CD8-positive, alpha-beta memory T cell (primary cell): ENCODE measurements at regions of chr11 and their contacts with region 1.

Region 1: DNA sequence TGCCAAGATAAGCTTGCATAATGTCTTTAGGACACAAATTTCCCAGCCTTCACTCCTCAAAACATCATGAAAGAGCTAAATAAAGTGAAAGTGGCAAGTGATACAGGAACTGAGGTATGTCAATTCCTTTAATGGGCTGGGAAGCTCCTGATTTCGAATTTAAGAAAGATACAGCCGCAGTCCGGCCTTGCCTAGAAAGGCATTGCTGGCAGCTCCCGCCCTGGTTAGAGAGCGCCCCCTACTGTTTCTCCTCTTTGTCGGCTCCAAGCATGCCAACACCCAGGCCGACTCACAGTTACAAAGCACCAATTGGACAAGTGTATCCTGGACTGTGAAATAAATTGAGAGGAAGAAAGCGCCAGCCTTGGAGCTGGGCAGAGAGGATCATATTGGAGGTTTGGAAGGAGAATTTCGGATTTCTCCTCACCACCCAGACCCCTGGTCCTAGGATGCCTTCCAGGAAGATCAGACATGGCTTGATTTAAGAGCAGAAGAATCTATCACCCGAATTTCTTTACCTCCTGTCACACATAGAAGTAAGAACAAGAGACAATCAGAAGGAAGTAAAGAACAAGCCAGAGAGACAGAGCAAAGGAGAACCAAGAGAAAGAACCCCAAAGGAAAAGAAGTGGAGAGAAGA is 84.0 kb downstream of the FAM76B start:
- DNase-seq: peak; percentile 67 to 88 (median 79)
- H3K4me3 ChIP-seq: peak overlapping the region; percentile 35
- H3K4me3 Mint-ChIP-seq: no peak overlapping the region
- H3K27ac ChIP-seq: no peak overlapping the region
- H3K27ac Mint-ChIP-seq: no peak overlapping the region
- H3K4me1 ChIP-seq: peaks cover 47% of the 10 kb centered on the region
- H3K4me1 Mint-ChIP-seq: peaks cover 7 to 10% (median 9%) of the 10 kb centered on the region in 3 donors
- H3K27me3 ChIP-seq: no peaks in the 10 kb centered on the region
- H3K27me3 Mint-ChIP-seq: no peaks in the 10 kb centered on the region

Region 2: DNA sequence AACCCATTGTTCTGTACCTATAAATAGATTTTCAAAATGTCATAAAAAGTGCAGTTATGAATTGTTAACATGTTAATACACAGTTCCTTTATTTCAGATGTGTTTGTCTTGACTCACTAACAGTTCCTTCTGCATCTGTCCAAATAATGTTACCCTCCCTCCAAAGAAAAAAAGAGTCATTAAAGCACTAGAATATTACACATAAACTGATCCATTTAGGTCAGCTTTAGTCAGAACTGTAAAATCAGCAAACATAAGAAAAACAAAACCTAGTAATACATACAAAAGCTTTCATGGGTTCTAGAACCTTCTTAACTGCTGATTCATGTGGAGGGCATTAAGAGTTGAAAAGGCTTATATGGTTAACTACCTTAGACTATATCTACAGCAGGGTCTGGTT is 540.0 kb before region 1 on chr11:
- CTCF ChIA-PET with region 1: interaction called, 335 read pairs
- POLR2A ChIA-PET with region 1: no interaction called
- DNase-seq: no peak
- H3K4me3 ChIP-seq: no peak overlapping the region
- H3K4me3 Mint-ChIP-seq: no peak overlapping the region
- H3K27ac ChIP-seq: no peak overlapping the region
- H3K27ac Mint-ChIP-seq: peak overlapping the region in 1 of 8 donors; percentile 64
- H3K4me1 ChIP-seq: no peaks in the 10 kb centered on the region
- H3K4me1 Mint-ChIP-seq: peaks cover 0 to 14% (median 14%) of the 10 kb centered on the region in 3 donors
- H3K27me3 ChIP-seq: no peaks in the 10 kb centered on the region
- H3K27me3 Mint-ChIP-seq: no peaks in the 10 kb centered on the region

Region 3: GRCh38 chr11:95212609-95213008 is 493.0 kb before region 1 on chr11:
- CTCF ChIA-PET with region 1: interaction called, 15 read pairs
- POLR2A ChIA-PET with region 1: no interaction called
- DNase-seq: no peak
- H3K4me3 ChIP-seq: no peak overlapping the region
- H3K4me3 Mint-ChIP-seq: no peak overlapping the region
- H3K27ac ChIP-seq: no peak overlapping the region
- H3K27ac Mint-ChIP-seq: peak overlapping the region in 1 of 8 donors; percentile 9
- H3K4me1 ChIP-seq: peaks cover 7% of the 10 kb centered on the region
- H3K4me1 Mint-ChIP-seq: peaks cover 5 to 28% (median 25%) of the 10 kb centered on the region in 3 donors
- H3K27me3 ChIP-seq: no peaks in the 10 kb centered on the region
- H3K27me3 Mint-ChIP-seq: no peaks in the 10 kb centered on the region

Region 4: GRCh38 chr11:95231127-95231880 is 474.3 kb before region 1 on chr11 and contains the start of gene SESN3:
- CTCF ChIA-PET with region 1: interaction called, 24 read pairs
- POLR2A ChIA-PET with region 1: interaction called, 9 read pairs
- DNase-seq: peak; percentile 98 to 99 (median 99)
- H3K4me3 ChIP-seq: peak within 1 kb of the TSS; percentile 68
- H3K4me3 Mint-ChIP-seq: peak within 1 kb of the TSS in 6 of 7 donors; percentile 90 to 97 (median 94)
- H3K27ac ChIP-seq: peak within 1 kb of the TSS; percentile 60
- H3K27ac Mint-ChIP-seq: peak within 1 kb of the TSS; percentile 83 to 98 (median 89)
- H3K4me1 ChIP-seq: peaks cover 24% of the 10 kb centered on the region
- H3K4me1 Mint-ChIP-seq: peaks cover 41 to 50% (median 49%) of the 10 kb centered on the region in 3 donors
- H3K27me3 ChIP-seq: no peaks in the 10 kb centered on the region
- H3K27me3 Mint-ChIP-seq: no peaks in the 10 kb centered on the region
- total RNA-seq, gene SESN3: 18.8 to 19.7 TPM

Region 5: DNA sequence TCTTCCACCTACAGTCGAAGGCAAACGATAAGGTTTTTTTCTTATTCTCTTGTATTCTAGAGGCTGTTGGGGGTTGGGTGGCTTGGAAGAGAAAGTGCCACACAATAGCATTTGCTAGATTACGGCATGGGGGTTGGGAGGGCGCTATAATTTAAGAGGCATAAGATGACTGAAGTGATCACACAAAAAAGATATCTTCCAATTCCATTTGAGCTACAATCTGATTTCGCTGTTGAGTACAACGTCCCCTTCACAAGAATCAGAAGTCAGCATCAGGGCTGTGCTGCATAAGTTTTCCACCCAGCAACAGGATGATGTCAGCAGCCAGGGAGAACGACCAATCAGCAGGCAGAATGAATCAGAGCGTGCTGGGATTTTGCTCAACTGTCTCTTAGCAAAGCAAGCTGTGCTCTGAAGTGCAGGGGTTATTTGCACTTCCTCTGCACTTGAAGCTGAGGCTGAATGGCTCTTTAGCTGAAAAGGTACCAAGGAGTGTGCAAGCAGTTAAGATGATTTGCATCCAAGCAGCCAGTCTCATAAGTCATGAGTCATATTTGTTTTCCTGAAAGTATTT is 451.4 kb before region 1 on chr11:
- CTCF ChIA-PET with region 1: interaction called, 11 read pairs
- POLR2A ChIA-PET with region 1: interaction called, 5 read pairs
- DNase-seq: peak; percentile 50 to 85 (median 72)
- H3K4me3 ChIP-seq: peak overlapping the region; percentile 52
- H3K4me3 Mint-ChIP-seq: peak overlapping the region; percentile 81 to 94 (median 88)
- H3K27ac ChIP-seq: peak overlapping the region; percentile 10
- H3K27ac Mint-ChIP-seq: peak overlapping the region; percentile 35 to 96 (median 88)
- H3K4me1 ChIP-seq: peaks cover 37% of the 10 kb centered on the region
- H3K4me1 Mint-ChIP-seq: peaks cover 21 to 41% (median 31%) of the 10 kb centered on the region in 3 donors
- H3K27me3 ChIP-seq: no peaks in the 10 kb centered on the region
- H3K27me3 Mint-ChIP-seq: no peaks in the 10 kb centered on the region

Region 6: GRCh38 chr11:95605271-95605940 is 100.2 kb before region 1 on chr11:
- CTCF ChIA-PET with region 1: no interaction called
- POLR2A ChIA-PET with region 1: no interaction called
- DNase-seq: no peak
- H3K4me3 ChIP-seq: no peak overlapping the region
- H3K4me3 Mint-ChIP-seq: no peak overlapping the region
- H3K27ac ChIP-seq: no peak overlapping the region
- H3K27ac Mint-ChIP-seq: no peak overlapping the region
- H3K4me1 ChIP-seq: peaks cover 3% of the 10 kb centered on the region
- H3K4me1 Mint-ChIP-seq: peaks cover under 1 to 12% (median 8%) of the 10 kb centered on the region in 3 donors
- H3K27me3 ChIP-seq: no peaks in the 10 kb centered on the region
- H3K27me3 Mint-ChIP-seq: peaks cover 1 to 4% of the 10 kb centered on the region in 2 donors

Region 7: DNA sequence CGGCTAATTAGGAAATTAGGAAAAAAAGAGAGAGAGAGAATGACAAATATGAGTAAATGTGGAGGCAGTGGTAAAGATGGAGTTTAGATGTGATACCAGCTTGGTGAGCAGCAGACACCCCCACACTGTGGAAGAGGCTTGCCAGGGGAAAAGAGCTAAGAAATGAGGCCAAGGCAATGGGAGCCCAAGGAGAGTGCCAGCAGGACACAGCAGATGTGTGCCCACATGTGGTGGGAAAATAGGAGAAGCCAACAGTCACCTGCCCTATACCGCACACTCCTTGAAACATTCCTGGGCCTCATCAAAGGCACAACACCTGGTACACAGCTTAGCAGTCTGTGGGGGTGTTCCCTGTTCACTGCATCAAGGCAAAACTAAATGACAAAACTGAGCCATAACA is 20.9 kb before region 1 on chr11:
- CTCF ChIA-PET with region 1: interaction called, 10 read pairs
- POLR2A ChIA-PET with region 1: no interaction called
- DNase-seq: no peak
- H3K4me3 ChIP-seq: no peak overlapping the region
- H3K4me3 Mint-ChIP-seq: no peak overlapping the region
- H3K27ac ChIP-seq: no peak overlapping the region
- H3K27ac Mint-ChIP-seq: peak overlapping the region in 5 of 8 donors; percentile 34 to 83 (median 40)
- H3K4me1 ChIP-seq: peaks cover 77% of the 10 kb centered on the region
- H3K4me1 Mint-ChIP-seq: peaks cover 19 to 47% (median 22%) of the 10 kb centered on the region in 3 donors
- H3K27me3 ChIP-seq: no peaks in the 10 kb centered on the region
- H3K27me3 Mint-ChIP-seq: no peaks in the 10 kb centered on the region

Region 8: DNA sequence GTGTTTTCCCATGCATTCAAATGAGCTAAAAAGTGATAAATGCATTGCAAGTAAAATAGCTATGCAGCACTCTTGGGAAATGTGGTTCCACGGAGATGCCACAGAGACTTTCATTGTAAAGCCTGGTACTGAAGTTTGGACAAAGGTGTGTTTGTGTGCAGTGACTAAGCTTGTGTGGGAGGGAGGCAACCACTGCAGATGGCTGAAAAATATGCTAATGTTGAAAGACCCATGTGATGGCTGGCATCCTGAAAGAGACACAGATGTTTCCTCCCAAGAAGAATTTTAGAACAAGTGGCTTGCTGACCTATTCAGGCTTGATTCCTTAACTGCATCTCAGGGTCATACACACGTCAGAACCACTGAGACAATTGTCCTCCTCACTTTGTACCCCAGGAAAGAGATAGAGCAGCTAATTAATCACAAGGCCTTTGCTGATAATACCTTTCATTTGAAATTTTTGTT is 10.2 kb after region 1 on chr11:
- CTCF ChIA-PET with region 1: interaction called, 10 read pairs
- POLR2A ChIA-PET with region 1: no interaction called
- DNase-seq: no peak
- H3K4me3 ChIP-seq: no peak overlapping the region
- H3K4me3 Mint-ChIP-seq: peak overlapping the region in 1 of 7 donors; percentile 14
- H3K27ac ChIP-seq: no peak overlapping the region
- H3K27ac Mint-ChIP-seq: peak overlapping the region in 4 of 8 donors; percentile 16 to 41 (median 28)
- H3K4me1 ChIP-seq: peaks cover 15% of the 10 kb centered on the region
- H3K4me1 Mint-ChIP-seq: peaks cover 14 to 36% (median 23%) of the 10 kb centered on the region in 3 donors
- H3K27me3 ChIP-seq: no peaks in the 10 kb centered on the region
- H3K27me3 Mint-ChIP-seq: peaks cover 2 to 18% of the 10 kb centered on the region in 2 donors

Region 9: GRCh38 chr11:96075532-96075959 is 369.9 kb after region 1 on chr11:
- CTCF ChIA-PET with region 1: no interaction called
- POLR2A ChIA-PET with region 1: no interaction called
- DNase-seq: no peak
- H3K4me3 ChIP-seq: no peak overlapping the region
- H3K4me3 Mint-ChIP-seq: peak overlapping the region in 6 of 7 donors; percentile 20 to 76 (median 52)
- H3K27ac ChIP-seq: no peak overlapping the region
- H3K27ac Mint-ChIP-seq: peak overlapping the region; percentile 54 to 93 (median 79)
- H3K4me1 ChIP-seq: peaks cover 11% of the 10 kb centered on the region
- H3K4me1 Mint-ChIP-seq: peaks cover 36 to 60% (median 56%) of the 10 kb centered on the region in 3 donors
- H3K27me3 ChIP-seq: no peaks in the 10 kb centered on the region
- H3K27me3 Mint-ChIP-seq: no peaks in the 10 kb centered on the region